Posterior cingulate gyrus (tissue), 11 donors: ENCODE measurements at regions of chr10 and their contacts with region 1.

Region 1: DNA sequence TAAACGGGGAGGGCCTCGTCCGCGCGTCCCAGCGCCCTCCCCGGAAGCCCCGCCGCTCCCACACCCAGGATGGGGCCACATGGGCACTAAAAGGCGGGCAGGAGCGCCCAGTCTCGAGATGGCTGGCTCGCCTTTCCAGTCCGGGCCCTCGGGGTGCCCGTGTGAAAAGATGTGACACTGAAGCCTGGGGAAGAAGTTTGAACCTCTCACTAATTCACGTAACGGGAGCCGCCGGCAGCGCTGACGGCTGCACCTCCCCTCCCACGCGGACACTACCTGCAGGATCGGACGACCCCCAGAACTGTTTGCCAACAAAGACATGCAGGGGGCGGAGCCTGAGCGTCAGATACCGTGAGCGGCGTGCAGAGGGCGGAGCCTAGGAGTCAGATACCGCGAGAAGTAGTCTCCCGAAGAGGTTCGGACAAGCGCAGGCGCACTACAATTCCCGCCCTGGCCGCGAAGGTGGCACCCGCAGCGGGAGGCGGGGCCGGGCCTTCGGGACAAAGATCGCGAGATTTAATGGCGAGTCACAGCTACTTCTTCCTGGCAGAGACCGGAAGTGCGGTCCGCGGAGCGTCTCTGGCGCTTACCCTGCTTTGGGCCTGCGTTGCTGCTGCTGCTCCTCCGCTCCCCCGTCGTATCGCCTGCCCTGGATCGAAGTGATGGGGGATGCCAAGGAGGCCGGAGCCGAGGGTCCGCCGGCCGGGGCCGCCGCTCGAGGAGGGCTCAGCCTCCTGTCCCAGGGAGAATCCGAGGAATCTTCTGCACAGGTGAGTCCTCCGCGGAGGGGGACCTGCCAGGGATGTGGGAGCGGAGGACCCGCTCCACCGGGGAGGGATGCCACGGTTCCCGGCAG is at the start of gene EDRF1:
- DNase-seq: peak; percentile 98 to 100 (median 99)

Region 2: DNA sequence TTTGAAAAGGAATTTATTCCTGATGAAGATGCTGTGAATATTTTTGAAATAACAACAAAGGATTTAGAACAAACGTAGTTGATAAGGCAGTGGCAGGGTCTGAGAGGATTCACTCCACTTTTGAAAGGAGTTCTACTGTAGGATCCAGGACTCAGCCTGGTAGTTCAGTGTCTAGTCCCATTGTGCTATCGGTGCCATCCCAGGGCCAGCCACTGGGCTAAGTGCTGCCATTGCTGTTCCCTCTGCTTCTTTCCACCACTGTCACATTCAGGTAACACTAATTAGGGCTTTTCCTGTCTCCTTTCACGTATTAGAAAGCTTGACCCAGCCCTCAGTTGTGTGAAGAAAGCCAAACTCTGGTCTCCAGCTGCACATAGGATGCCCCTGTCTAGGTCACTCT is 213.7 kb before region 1 on chr10:
- intact Hi-C with region 1: no loop called
- DNase-seq: no peak

Region 3: GRCh38 chr10:125822878-125823662 is 103.7 kb after region 1 on chr10 and contains the starts of genes BCCIP and UROS:
- intact Hi-C with region 1: loop called (anchors 10 kb)
- DNase-seq: peak; percentile 84 to 98 (median 90)